Activated T-helper 2 cell treated with anti-CD3 and anti-CD28 coated beads, Interferon-gamma antibody, Interleukin-2, Interleukin-4, amounts not matched to agents 10 μg/mL and 5 μg/mL and 100 μg/mL, durations not matched to agents 14 hours and 24 hours and 36 hours (primary cell): ENCODE measurements at regions of chr9 and their contacts with region 1.

Region 1: GRCh38 chr9:21326526-21327139 is 8.6 kb downstream of the KLHL9 start:
- DNase-seq: no peak
- H3K4me3 Mint-ChIP-seq: no peak overlapping the region
- H3K27ac Mint-ChIP-seq: no peak overlapping the region
- H3K4me1 Mint-ChIP-seq: peaks cover 28% of the 10 kb centered on the region
- H3K27me3 Mint-ChIP-seq: no peaks in the 10 kb centered on the region

Region 2: GRCh38 chr9:21252721-21253547 is 73.7 kb before region 1 on chr9:
- intact Hi-C with region 1: no loop called
- DNase-seq: no peak
- H3K4me3 Mint-ChIP-seq: no peak overlapping the region
- H3K27ac Mint-ChIP-seq: no peak overlapping the region
- H3K4me1 Mint-ChIP-seq: peaks cover 9% of the 10 kb centered on the region
- H3K27me3 Mint-ChIP-seq: peaks cover 47% of the 10 kb centered on the region

Region 3: GRCh38 chr9:21395778-21396717 is 69.4 kb after region 1 on chr9:
- intact Hi-C with region 1: loop called (anchors 1 kb)
- DNase-seq: peak; percentile 33
- H3K4me3 Mint-ChIP-seq: peak overlapping the region; percentile 81
- H3K27ac Mint-ChIP-seq: no peak overlapping the region
- H3K4me1 Mint-ChIP-seq: peaks cover 16% of the 10 kb centered on the region
- H3K27me3 Mint-ChIP-seq: peaks cover 65% of the 10 kb centered on the region

Region 4: GRCh38 chr9:21434202-21435014 is 107.8 kb after region 1 on chr9:
- intact Hi-C with region 1: loop called (anchors 10 kb)
- DNase-seq: no peak
- H3K4me3 Mint-ChIP-seq: no peak overlapping the region
- H3K27ac Mint-ChIP-seq: no peak overlapping the region
- H3K4me1 Mint-ChIP-seq: peaks cover 2% of the 10 kb centered on the region
- H3K27me3 Mint-ChIP-seq: peaks cover 49% of the 10 kb centered on the region

Region 5: DNA sequence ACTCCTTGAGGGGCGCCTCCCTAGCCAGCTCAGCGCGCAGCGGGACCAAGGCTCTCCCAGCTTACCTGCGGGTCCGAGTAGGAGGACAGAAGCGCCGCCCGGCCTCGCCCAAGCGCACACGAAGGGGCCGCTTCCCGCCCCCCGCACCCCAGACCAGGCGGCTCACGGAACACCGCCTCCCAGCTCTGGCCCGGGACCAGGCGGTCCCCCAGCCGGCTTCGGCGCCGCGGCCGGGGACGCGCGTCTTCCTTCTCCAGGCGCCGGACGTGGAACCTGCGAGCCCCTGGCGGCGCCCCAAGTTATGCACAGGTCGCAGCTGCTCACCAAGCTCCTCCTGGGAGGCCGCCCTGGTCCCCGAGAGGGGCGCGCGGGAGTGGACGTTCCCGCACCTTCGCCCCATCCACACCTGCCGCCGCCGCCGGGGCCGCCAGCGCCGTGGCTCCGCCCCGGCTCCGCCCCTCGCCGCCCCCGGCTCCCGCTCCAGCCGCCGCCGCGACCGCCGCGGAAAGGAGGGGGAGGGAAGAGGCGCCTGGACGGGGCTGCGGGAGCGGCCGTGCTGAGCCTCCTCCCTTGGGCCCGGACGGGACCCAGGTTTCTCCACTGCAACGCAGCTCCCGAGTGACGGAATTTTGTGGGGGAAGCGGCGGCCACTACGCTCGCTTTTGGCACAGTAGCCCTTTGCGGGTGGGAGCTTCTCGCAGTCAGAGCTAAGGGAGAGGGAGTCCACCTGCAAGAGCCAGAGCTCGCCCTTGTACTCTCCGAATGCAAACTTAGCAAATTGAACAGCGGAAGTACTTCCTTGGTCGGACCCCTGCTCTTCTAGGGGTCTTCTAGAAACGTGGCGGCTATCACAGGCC is 233.0 kb after region 1 on chr9:
- intact Hi-C with region 1: loop called (anchors 5 kb)
- DNase-seq: peak; percentile 26
- H3K4me3 Mint-ChIP-seq: peak overlapping the region; percentile 79
- H3K27ac Mint-ChIP-seq: no peak overlapping the region
- H3K4me1 Mint-ChIP-seq: peaks cover 19% of the 10 kb centered on the region
- H3K27me3 Mint-ChIP-seq: peaks cover 58% of the 10 kb centered on the region

Region 6: GRCh38 chr9:21709464-21710058 is 382.9 kb after region 1 on chr9:
- intact Hi-C with region 1: loop called (anchors 10 kb)
- DNase-seq: peak; percentile 41
- H3K4me3 Mint-ChIP-seq: no peak overlapping the region
- H3K27ac Mint-ChIP-seq: no peak overlapping the region
- H3K4me1 Mint-ChIP-seq: peaks cover 4% of the 10 kb centered on the region
- H3K27me3 Mint-ChIP-seq: peaks cover 24% of the 10 kb centered on the region

Region 7: GRCh38 chr9:21795483-21795882 is 468.9 kb after region 1 on chr9:
- intact Hi-C with region 1: loop called (anchors 2 kb)
- DNase-seq: no peak
- H3K4me3 Mint-ChIP-seq: no peak overlapping the region
- H3K27ac Mint-ChIP-seq: no peak overlapping the region
- H3K4me1 Mint-ChIP-seq: peaks cover 9% of the 10 kb centered on the region
- H3K27me3 Mint-ChIP-seq: peaks cover 49% of the 10 kb centered on the region